ENCODE measurements at regions of chr2 and their contacts with region 1.

Region 1: DNA sequence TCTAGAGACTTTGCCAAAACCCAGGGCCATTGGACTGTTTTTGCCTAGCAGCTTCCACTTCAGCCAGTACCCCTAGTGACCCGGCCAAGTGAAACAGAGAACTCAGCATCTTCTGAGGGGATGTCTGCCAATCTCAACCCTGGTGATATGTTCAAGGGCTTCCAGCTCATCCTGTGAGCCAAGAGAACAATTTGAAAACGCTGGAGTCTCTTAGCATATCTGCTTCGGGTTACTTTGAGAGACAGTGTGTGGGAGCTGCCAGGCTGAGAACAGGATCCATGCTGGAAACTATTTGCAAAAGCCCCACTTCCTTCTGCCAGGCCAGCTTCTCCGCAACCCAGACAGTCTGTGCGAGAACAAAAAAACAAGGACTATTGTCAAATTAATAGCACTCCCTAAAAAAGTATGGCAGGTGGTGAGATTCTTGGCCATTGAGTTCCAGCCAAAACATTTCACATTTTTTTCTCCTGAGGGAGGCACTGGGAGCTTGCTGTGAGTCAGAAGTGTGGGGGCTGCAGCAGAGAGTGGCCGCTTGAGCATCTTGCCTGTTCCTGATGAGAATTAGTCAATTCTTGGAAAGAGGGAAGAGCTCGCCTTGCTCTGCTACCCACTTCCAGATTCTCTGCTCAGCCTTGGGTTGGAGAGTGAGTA is 395.6 kb upstream of the TRIB2 start:
- DNase-seq: peak; percentile 82 to 83
- ATAC-seq: peak; percentile 81
- H3K4me3 ChIP-seq: no peak overlapping the region
- H3K27ac ChIP-seq: peak overlapping the region in 1 of 2 donors; percentile 97
- H3K4me1 ChIP-seq: peaks cover 0 to 9% of the 10 kb centered on the region in 2 donors
- H3K27me3 ChIP-seq: no peaks in the 10 kb centered on the region

Region 2: DNA sequence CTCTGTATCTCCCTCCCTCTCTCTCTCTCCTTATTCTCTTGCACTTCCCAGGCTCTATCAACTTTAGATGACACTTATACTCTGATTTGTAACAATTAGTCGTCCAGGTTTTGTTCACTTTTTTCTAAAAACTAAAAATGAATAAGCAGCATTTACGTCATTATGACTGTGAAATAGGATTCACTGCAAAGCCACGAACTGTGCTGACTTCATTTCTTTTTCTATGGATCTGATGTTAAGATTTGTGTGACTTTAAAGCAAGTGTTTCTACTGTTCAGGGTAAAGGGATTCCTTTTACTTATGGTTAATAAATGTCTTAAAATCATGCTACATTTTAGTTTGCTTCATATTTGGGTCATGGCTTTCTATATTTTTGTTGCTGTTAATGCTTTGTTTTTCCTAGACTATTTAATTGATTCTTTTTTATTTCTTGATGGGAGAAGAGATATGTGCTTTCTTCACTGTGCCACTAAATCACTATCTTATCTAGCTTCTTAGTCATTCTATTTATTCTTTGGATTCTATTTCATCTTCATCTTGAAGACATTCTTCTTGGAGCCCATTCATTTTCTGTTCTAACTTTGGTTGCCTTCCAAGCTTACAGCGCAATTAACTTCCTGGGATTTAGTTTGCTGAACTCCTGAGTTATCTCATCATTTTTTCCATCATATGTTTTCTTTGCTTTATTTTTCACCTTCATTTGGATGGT is 84.8 kb before region 1 on chr2:
- intact Hi-C with region 1: loop called in 1 of 2 experiments (anchors 10 kb)
- DNase-seq: no peak
- ATAC-seq: no peak
- H3K4me3 ChIP-seq: no peak overlapping the region
- H3K27ac ChIP-seq: no peak overlapping the region
- H3K4me1 ChIP-seq: no peaks in the 10 kb centered on the region
- H3K27me3 ChIP-seq: no peaks in the 10 kb centered on the region

Region 3: GRCh38 chr2:12389344-12390045 is 68.4 kb after region 1 on chr2:
- intact Hi-C with region 1: loop called in 1 of 2 experiments (anchors 5 kb)
- DNase-seq: no peak
- ATAC-seq: no peak
- H3K4me3 ChIP-seq: peak overlapping the region in 1 of 2 donors; percentile 48
- H3K27ac ChIP-seq: no peak overlapping the region
- H3K4me1 ChIP-seq: peaks cover 3 to 6% of the 10 kb centered on the region in 2 donors
- H3K27me3 ChIP-seq: no peaks in the 10 kb centered on the region

Region 4: DNA sequence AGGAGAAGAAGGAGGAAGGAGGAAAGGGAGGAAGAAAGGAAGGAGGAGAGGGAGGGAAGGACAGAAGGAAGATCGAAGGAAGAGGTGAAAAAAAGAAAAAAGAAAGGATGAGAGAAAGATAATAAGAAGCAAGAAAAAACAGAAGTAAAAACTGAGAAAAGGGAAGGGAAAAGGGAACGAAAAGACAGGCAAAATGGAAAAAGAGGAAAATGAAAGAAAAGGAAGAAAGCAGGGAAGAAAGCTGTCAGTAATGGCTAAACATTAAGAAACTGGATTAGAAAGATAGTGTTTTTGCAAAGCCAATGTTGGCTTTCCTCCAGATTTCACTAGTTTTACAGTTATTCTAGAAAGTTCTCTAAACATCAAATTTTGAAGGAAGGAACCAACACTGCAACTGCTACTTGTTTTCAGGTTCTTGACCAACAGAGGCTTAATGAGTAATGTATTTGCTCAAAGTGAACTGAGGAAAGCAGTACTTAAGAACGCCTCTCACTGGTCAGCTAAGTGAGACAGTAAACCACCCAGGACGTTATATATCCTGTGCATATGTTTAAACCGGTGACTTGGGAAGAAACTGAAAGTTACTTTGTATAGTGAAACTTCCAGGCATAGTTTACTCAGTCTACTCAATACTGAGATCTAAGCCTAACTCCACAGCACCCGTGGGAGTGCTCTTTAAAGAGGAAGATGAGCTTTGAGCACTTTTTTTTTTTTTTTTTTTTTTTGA is 109.5 kb after region 1 on chr2:
- intact Hi-C with region 1: loop called in 1 of 2 experiments (anchors 10 kb)
- DNase-seq: no peak
- ATAC-seq: no peak
- H3K4me3 ChIP-seq: no peak overlapping the region
- H3K27ac ChIP-seq: no peak overlapping the region
- H3K4me1 ChIP-seq: peaks cover 0 to 8% of the 10 kb centered on the region in 2 donors
- H3K27me3 ChIP-seq: no peaks in the 10 kb centered on the region

Region 5: GRCh38 chr2:12534646-12535263 is 213.6 kb after region 1 on chr2:
- intact Hi-C with region 1: loop called in 1 of 2 experiments (anchors 10 kb)
- DNase-seq: peak in 1 of 2 donors; percentile 46
- ATAC-seq: peak; percentile 56
- H3K4me3 ChIP-seq: no peak overlapping the region
- H3K27ac ChIP-seq: peak overlapping the region; percentile 11 to 71
- H3K4me1 ChIP-seq: peaks cover 6 to 11% of the 10 kb centered on the region in 2 donors
- H3K27me3 ChIP-seq: no peaks in the 10 kb centered on the region

Region 6: GRCh38 chr2:12649602-12650400 is 328.7 kb after region 1 on chr2:
- intact Hi-C with region 1: no loop called
- DNase-seq: no peak
- ATAC-seq: no peak
- H3K4me3 ChIP-seq: no peak overlapping the region
- H3K27ac ChIP-seq: no peak overlapping the region
- H3K4me1 ChIP-seq: peaks cover 0 to 1% of the 10 kb centered on the region in 2 donors
- H3K27me3 ChIP-seq: no peaks in the 10 kb centered on the region

Region 7: DNA sequence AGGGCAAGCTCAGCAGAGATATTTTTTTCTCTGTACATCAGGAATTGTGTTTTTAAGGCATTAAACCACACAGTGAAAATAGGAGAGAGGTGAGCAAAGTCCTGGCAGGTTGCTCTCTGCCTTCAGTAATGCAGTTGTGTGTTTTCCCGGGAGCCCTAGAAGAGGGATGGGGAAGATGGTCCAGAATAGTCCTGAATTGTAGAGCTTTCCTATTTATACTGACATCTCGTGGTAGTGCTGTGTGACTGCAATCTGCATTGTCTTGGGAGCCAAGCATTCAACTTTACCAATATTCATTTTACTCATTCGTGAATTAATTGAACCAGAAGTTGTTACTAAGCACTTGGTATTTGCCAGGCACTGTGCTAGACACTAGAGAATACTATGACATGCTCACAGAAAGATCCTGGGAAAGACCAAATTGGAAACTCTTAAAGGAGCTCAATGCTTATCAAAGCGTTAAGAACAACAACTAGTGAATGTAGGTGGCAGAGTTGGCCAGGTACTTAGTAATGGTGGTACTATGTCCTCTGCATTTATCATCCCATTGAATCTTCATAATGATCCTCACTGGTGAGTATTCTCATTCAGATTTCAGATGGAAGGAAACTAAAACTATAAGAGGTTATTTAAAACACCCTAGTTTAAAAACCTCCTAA is 610.2 kb after region 1 on chr2:
- intact Hi-C with region 1: loop called in 1 of 2 experiments (anchors 10 kb)
- DNase-seq: no peak
- ATAC-seq: peak; percentile 83
- H3K4me3 ChIP-seq: no peak overlapping the region
- H3K27ac ChIP-seq: no peak overlapping the region
- H3K4me1 ChIP-seq: no peaks in the 10 kb centered on the region
- H3K27me3 ChIP-seq: no peaks in the 10 kb centered on the region